ENCODE measurements at regions of chr11 and their contacts with region 1.

Region 1: DNA sequence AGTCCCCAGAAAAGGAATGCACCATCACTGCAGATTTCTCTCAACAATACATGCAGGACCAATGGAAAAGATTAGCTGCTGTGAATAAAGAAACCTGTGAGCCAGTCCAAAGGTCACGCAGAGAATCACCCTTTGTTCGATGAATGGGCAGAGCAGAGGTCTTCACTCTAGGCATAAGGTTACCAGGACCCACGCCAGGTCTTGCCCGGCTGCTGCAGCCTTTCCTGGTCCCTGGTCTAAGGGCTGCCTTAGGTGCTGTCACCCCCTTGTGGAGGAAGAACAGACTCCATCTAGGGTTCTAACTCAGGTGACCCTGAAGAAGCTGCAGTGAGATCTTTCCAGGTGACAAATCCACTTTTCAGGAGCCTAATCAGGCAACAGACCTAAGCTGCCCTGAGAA is 29.0 kb upstream of the NAP1L4 start:
- DNase-seq: no peak
- ATAC-seq: peak; percentile 65 to 78 (median 70)
- H3K4me3 ChIP-seq: no peak overlapping the region
- H3K27ac ChIP-seq: no peak overlapping the region
- H3K4me1 ChIP-seq: no peaks in the 10 kb centered on the region
- H3K27me3 ChIP-seq: no peaks in the 10 kb centered on the region
- CTCF ChIP-seq: peak; percentile 37

Region 2: GRCh38 chr11:2930704-2931428 is 90.3 kb before region 1 on chr11:
- intact Hi-C with region 1: no loop called
- DNase-seq: peak; percentile 50 to 70
- ATAC-seq: peak; percentile 50 to 61 (median 55)
- H3K4me3 ChIP-seq: peak overlapping the region; percentile 65
- H3K27ac ChIP-seq: no peak overlapping the region
- H3K4me1 ChIP-seq: peaks cover 11% of the 10 kb centered on the region
- H3K27me3 ChIP-seq: peaks cover 0 to 56% (median 26%) of the 10 kb centered on the region in 3 donors
- CTCF ChIP-seq: peak; percentile 35

Region 3: DNA sequence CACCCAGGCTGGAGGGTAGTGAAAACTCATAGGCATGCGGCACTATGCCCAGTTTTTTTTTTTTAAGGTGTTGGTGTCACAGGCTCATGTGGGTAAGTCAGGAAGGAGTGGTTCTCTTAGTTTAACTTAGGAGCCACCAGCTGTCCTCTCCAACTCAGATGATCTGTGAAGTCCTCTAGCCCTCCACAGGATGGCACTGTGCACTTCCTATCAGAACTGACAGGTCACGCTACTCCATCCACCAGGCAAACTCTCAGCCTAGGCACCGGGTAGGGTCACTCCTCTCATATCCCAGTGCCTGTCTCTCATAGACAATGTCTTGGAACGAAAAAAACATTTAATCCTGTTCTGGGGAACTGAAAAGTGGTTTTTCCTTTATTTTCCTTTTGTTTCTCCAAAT is 45.5 kb before region 1 on chr11:
- intact Hi-C with region 1: loop called in 1 of 2 experiments (anchors 5 kb)
- DNase-seq: no peak
- ATAC-seq: peak; percentile 74 to 82 (median 80)
- H3K4me3 ChIP-seq: no peak overlapping the region
- H3K27ac ChIP-seq: no peak overlapping the region
- H3K4me1 ChIP-seq: peaks cover 6% of the 10 kb centered on the region
- H3K27me3 ChIP-seq: no peaks in the 10 kb centered on the region
- CTCF ChIP-seq: peak; percentile 48

Region 4: DNA sequence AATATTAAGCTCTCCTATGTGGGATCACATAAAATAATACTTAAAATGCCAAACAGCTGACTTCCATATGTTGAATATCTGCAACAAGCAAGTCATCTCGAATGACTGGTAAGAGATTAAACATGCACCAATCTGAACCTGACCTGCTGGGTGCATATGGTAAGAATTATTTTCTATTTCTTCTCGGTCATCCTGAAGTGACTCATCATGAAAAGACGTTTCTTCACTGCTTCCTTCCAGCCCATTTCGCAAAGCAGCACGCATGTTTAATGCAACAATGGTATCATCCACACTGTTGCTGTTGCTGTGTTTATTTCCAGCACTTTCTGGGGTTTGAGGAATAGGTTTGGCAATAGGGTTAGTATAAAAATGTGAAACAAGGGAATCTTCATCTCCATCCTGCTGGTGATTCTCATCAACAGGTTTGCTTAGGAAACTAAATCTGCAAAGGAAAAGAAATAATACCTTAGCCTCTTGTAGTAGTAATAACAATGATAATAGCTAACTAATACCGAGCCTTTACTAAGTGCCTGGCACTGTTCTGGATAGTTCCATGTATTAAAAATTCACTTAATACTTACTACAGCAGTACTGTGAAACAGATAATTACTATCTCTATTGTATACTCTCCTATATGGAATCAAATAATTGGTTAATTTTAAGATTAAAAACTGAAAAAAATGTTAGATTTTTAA is 702.0 kb after region 1 on chr11:
- intact Hi-C with region 1: no loop called
- DNase-seq: no peak
- ATAC-seq: peak; percentile 62 to 83 (median 76)
- H3K4me3 ChIP-seq: no peak overlapping the region
- H3K27ac ChIP-seq: peak overlapping the region; percentile 34
- H3K4me1 ChIP-seq: no peaks in the 10 kb centered on the region
- H3K27me3 ChIP-seq: no peaks in the 10 kb centered on the region
- CTCF ChIP-seq: no peak

Measured in psoas muscle (tissue), 8 donors.